Left lung (tissue), 14 donors: ENCODE measurements at regions of chr1 and their contacts with region 1.

Region 1: GRCh38 chr1:220690140-220691025 is at the start of gene C1orf115:
- DNase-seq: peak; percentile 68 to 93 (median 82)
- ATAC-seq: peak; percentile 100
- H3K4me3 ChIP-seq: peak within 1 kb of the TSS; percentile 61 to 80
- H3K27ac ChIP-seq: peak within 1 kb of the TSS in 1 of 2 donors; percentile 70
- H3K4me1 ChIP-seq: peaks cover 0 to 22% of the 10 kb centered on the region in 2 donors
- H3K27me3 ChIP-seq: peaks cover 0 to 26% of the 10 kb centered on the region in 2 donors
- CTCF ChIP-seq: peak; percentile 97 to 99
- polyA plus RNA-seq, gene C1orf115: 17.6 to 25.0 (median 19.9) TPM

Region 2: DNA sequence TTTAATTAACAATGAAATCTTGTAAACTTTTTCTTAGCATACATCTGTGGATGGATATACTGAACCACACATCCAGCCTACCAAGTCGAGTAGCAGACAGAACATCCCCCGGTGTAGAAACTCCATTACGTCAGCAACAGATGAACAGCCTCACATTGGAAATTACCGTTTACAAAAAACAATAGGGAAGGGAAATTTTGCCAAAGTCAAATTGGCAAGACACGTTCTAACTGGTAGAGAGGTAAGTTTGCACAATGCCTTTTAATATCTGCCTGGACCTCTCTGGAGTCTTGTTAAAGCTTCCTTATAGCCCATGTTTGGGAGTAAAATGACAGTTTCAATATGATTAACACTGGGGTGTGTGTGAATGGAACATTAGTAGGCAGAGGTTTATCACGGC is 111.1 kb before region 1 on chr1:
- intact Hi-C with region 1: no loop called
- DNase-seq: no peak
- ATAC-seq: no peak
- H3K4me3 ChIP-seq: no peak overlapping the region
- H3K27ac ChIP-seq: no peak overlapping the region
- H3K4me1 ChIP-seq: no peaks in the 10 kb centered on the region
- H3K27me3 ChIP-seq: no peaks in the 10 kb centered on the region
- CTCF ChIP-seq: no peak

Region 3: DNA sequence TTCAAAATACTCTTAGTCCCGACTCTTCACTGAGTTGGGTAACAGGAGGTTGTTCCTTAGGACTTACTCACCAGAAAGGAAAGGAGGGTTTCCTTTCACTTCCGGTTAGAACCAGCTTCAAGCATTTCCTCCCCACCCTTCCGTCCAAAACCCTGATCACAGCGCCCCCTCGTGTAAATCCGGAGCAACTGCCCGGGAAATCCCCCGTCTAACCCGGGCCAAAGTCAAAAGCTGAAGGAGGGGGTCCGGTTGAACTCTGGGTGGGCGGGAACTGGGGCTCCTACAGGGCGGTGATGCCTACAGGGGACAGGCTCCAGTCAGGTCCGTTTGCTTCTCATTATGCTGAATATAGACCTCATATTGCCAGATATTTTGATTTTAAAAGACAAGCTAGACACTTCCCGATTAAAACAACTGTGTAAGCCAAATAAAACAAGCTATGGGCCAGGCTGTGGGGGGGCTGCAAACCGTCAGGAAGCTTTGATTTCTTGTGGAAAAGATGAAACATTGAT is 42.8 kb after region 1 on chr1:
- intact Hi-C with region 1: loop called in 1 of 2 experiments (anchors 5 kb)
- DNase-seq: peak; percentile 55 to 88 (median 82)
- ATAC-seq: peak; percentile 94
- H3K4me3 ChIP-seq: peak overlapping the region in 1 of 2 donors; percentile 11
- H3K27ac ChIP-seq: peak overlapping the region; percentile 72 to 81
- H3K4me1 ChIP-seq: peaks cover 0 to 18% of the 10 kb centered on the region in 2 donors
- H3K27me3 ChIP-seq: no peaks in the 10 kb centered on the region
- CTCF ChIP-seq: peak; percentile 77 to 83